Gastrocnemius medialis (tissue), 4 donors: ENCODE measurements at regions of chr5 and their contacts with region 1.

Region 1: DNA sequence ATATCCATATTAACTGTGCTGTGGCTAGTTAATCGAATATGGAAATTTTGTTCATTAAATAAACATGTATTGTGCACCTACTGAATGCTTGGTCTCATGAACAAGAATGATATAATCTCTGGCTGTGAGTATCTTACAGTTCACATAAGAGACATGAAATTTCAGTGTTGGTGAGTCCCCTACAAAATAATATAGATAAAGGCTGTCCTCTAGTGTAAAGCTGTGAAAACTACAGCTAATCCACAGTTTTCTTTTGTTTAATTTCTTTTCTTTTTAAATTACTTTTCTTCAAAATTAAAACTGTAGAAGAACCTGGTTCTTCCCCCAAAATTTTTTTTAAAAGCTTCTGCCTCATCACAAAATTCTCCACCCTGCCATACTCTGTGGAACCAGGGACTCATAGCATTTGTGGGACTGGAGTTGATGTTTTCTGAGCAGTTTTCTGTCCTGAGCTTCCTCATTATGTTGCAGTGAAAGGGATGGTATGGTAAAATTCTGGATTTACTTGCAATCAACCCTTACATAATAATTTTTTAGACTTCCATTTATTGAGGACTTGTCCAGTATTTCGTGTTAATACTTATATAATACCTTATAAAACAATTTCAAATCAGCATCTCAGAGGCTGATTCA is 135.0 kb downstream of the STK32A start:
- DNase-seq: no peak
- ATAC-seq: no peak
- H3K4me3 ChIP-seq: no peak overlapping the region
- H3K27ac ChIP-seq: no peak overlapping the region
- H3K4me1 ChIP-seq: no peaks in the 10 kb centered on the region
- H3K27me3 ChIP-seq: no peaks in the 10 kb centered on the region
- CTCF ChIP-seq: peak in 2 of 5 experiments; percentile 23 to 40
- POLR2A ChIP-seq: no peak

Region 2: DNA sequence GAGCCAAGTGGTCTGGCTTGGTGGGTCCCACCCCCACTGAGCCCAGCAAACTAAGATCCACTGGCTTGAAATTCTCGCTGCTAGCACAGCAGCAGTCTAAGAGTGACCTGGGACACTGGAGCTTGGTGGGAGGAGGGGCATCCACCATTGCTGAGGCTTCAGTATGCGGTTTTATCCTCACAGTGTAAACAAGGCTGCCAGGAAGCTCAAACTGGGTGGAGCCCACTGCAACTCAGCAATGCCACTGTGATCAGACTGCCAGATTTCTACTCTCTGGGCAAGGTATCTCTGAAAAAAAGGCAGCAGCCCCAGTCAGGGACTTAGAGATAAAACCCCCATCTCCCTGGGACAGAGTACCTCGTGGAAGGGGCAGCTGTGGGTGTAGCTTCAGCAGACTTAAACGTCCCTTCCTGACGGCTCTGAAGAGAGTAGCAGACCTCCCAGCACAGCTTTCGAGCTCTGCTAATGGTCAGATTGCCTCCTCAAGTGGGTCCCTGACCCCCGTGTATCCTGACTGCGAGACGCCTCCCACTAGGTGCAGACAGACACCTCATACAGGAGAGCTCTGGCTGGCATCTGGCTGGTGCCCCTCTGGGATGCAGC is 153.2 kb before region 1 on chr5:
- in situ Hi-C with region 1: loop called in 1 of 4 experiments (anchors 10 kb)
- intact Hi-C with region 1: no loop called
- DNase-seq: no peak
- ATAC-seq: no peak
- H3K4me3 ChIP-seq: no peak overlapping the region
- H3K27ac ChIP-seq: no peak overlapping the region
- H3K4me1 ChIP-seq: no peaks in the 10 kb centered on the region
- H3K27me3 ChIP-seq: peaks cover 0 to 2% (median 0%) of the 10 kb centered on the region in 3 donors
- CTCF ChIP-seq: no peak
- POLR2A ChIP-seq: no peak

Region 3: GRCh38 chr5:147332658-147333057 is 37.2 kb before region 1 on chr5:
- in situ Hi-C with region 1: no loop called
- intact Hi-C with region 1: no loop called
- DNase-seq: no peak
- ATAC-seq: no peak
- H3K4me3 ChIP-seq: no peak overlapping the region
- H3K27ac ChIP-seq: no peak overlapping the region
- H3K4me1 ChIP-seq: no peaks in the 10 kb centered on the region
- H3K27me3 ChIP-seq: no peaks in the 10 kb centered on the region
- CTCF ChIP-seq: no peak
- POLR2A ChIP-seq: no peak

Region 4: GRCh38 chr5:147403651-147404640 is 34.1 kb after region 1 on chr5:
- in situ Hi-C with region 1: no loop called
- intact Hi-C with region 1: no loop called
- DNase-seq: peak; percentile 76 to 82
- ATAC-seq: peak; percentile 96
- H3K4me3 ChIP-seq: peak overlapping the region; percentile 2 to 32 (median 9)
- H3K27ac ChIP-seq: peak overlapping the region; percentile 91 to 97 (median 92)
- H3K4me1 ChIP-seq: peaks cover 47 to 48% of the 10 kb centered on the region in 2 donors
- H3K27me3 ChIP-seq: no peaks in the 10 kb centered on the region
- CTCF ChIP-seq: no peak
- POLR2A ChIP-seq: peak; percentile 21 to 54